Panc1 (cell line): ENCODE measurements at regions of chr2 and their contacts with region 1.

Region 1: DNA sequence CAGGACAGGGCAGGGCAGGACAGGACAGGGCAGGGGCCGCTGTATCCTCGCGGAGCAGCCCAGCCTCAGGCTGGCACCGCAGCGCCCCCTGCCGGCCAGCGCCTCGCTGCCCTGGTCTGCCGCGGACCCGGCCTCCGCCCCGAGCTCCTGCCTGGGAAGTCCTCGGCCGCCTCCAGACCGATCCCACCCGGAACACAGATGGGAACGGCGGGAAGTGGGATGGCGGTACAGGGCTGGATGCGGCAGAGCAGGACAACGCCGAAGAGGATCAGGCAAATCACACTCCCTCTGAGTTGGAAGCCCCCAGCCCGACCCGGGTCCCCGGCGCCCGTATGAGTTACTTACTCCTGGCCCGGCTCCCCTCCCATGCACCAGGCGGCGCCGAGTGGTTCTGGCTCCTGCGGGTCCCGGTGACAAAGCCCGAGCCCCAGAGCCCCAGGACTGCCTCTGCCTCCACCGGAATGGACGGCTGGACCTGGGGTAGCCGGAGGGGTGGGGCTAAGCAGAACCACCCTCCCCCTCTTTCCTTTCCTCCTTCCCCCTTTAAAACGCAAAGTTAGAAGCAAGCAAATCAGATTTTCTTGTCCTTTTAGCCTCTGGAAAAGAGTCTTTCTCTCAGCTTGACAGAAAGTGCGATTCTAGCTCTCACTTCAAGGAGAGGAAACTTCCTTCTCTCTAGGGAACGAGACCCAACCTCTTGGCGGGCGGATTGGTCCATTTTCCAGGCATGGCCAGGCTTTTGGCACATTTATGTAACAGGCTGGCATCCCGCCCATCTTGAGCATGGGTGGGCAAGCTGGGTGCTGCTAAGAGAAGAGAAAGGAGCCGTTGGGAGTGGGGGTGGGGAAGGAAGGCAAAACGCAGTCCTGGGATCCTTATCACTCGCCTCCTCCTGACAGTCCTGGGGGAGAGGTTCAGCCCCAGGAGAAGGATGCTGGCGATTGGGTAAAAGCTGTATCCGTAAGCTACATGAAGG is at the start of gene TP53I3:
- DNase-seq: peak; percentile 76
- ATAC-seq: peak; percentile 96
- H3K4me3 ChIP-seq: peak within 1 kb of the TSS; percentile 65 to 89
- H3K27ac ChIP-seq: peak within 1 kb of the TSS; percentile 99
- H3K4me1 ChIP-seq: peaks cover 13% of the 10 kb centered on the region
- H3K27me3 ChIP-seq: no peaks in the 10 kb centered on the region
- CTCF ChIP-seq: peak; percentile 100
- total RNA-seq, gene TP53I3: 51.3 TPM

Region 2: DNA sequence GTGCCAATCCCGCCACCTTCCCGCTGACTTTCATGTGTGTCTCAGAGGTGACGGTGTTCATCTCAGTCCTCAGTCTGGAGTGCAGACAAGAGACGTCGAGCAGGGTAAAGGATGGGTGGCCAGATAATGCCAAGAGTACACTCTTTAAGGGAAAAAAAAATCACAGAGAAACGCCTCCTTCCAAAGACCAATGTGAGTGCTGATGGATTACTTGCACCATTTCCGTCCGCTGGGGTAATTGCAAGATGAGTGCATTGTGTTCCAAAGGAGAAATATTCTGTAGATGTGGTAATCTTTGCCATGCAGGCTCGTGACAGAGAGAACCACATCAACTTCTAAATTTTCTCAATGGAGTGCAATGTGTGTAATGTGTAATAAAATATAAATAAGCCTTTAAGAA is 618.7 kb before region 1 on chr2:
- CTCF ChIA-PET with region 1: no interaction called
- POLR2A ChIA-PET with region 1: no interaction called
- in situ Hi-C with region 1: no loop called
- intact Hi-C with region 1: no loop called
- DNase-seq: no peak
- ATAC-seq: no peak
- H3K4me3 ChIP-seq: no peak overlapping the region
- H3K27ac ChIP-seq: no peak overlapping the region
- H3K4me1 ChIP-seq: no peaks in the 10 kb centered on the region
- H3K27me3 ChIP-seq: no peaks in the 10 kb centered on the region
- CTCF ChIP-seq: no peak

Region 3: DNA sequence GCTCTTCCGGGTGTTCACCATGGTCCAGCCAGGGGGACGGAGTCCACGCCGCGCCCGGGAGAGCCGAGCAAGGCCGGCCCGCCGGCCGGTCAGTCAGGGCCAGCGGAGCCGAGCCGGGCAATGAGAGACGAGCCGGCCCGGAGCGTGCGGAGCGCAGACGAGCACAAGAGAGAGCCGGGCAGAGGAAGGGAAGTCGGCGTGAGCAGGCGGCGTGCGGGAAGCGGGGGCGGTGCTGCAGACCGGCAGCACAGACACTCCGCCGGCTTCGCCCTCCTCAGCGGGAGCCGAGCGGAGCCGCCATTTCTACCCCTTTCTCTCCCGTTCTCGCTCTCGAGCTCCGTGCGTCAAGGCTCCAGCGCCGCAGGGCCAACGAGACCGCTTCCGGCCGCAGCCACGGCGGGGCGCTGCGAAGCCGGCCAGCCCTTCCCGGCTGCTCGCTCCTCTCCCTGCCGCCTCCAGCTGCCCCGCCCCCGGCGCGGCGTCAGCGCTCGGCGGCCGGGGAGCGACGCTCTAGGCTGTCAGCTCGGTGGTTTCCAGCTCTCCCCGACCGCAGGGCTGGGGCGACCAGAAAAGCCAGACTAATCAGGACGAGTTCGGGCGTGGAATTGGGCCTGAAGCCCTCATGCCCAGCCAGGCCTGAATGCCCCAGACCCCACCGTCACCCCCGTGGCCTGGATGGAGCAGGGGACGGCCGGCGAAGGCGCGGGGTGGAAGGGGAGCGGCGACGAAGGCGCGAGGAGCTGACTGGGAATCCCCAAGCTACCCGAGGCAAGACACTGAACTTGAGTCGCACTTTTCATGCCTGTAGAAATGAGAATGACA is 157.7 kb before region 1 on chr2 and contains the start of gene ATAD2B:
- CTCF ChIA-PET with region 1: interaction called, 12 read pairs
- POLR2A ChIA-PET with region 1: no interaction called
- in situ Hi-C with region 1: no loop called
- intact Hi-C with region 1: no loop called
- DNase-seq: peak; percentile 84
- ATAC-seq: peak; percentile 93
- H3K4me3 ChIP-seq: peak within 1 kb of the TSS; percentile 92 to 93
- H3K27ac ChIP-seq: peak within 1 kb of the TSS; percentile 93
- H3K4me1 ChIP-seq: peaks cover 8% of the 10 kb centered on the region
- H3K27me3 ChIP-seq: no peaks in the 10 kb centered on the region
- CTCF ChIP-seq: peak; percentile 98
- total RNA-seq, gene ATAD2B: 17.9 TPM

Region 4: GRCh38 chr2:23988371-23988770 is 96.3 kb before region 1 on chr2:
- CTCF ChIA-PET with region 1: no interaction called
- POLR2A ChIA-PET with region 1: no interaction called
- in situ Hi-C with region 1: no loop called
- intact Hi-C with region 1: loop called (anchors 5 kb)
- DNase-seq: peak; percentile 22
- ATAC-seq: peak; percentile 87
- H3K4me3 ChIP-seq: no peak overlapping the region
- H3K27ac ChIP-seq: no peak overlapping the region
- H3K4me1 ChIP-seq: no peaks in the 10 kb centered on the region
- H3K27me3 ChIP-seq: no peaks in the 10 kb centered on the region
- CTCF ChIP-seq: no peak; the same call in 1 of the 2 replicates

Region 5: DNA sequence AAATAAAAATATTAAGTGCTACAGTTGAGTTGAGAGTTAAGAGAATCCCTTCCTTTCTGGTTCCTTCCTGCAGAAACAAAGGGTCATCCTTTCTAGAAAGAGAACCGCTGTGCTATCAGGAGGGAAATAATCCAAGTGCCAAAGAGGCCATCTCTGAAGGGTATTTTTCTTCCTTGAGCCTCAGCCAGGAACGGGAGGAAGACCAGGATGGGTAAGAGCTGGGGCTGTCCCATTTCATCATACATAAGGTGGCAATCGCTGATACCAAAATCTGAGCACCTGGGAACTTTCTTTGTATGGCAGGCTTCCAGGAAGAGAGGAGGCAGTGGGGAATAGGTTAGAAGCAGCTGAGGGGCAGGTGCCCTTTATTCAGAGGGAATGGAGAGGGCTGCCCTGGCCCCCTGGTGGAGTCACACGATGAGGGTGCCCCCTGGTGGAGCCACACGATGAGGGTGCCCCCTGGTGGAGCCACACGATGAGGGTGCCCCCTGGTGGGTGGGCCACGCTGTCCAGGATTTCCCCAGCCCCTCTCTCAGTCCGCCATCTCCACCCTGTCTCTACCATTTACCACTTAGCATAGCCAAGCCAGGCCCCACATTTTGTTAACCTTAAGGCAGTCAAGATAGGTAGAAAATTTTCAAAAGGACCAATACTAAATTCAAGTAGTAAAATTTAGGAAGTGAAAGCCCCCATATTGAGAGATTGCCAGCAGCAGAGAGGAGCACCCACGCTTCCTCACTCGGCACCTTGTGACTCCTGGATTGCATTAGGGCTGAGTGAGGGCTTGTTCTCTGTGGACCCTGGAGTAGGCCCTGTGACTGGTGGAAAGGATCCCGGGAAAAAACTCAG is 79.7 kb after region 1 on chr2:
- CTCF ChIA-PET with region 1: interaction called, 4 read pairs
- POLR2A ChIA-PET with region 1: no interaction called
- in situ Hi-C with region 1: no loop called
- intact Hi-C with region 1: loop called (anchors 10 kb)
- DNase-seq: no peak
- ATAC-seq: peak; percentile 87
- H3K4me3 ChIP-seq: no peak overlapping the region
- H3K27ac ChIP-seq: no peak overlapping the region
- H3K4me1 ChIP-seq: no peaks in the 10 kb centered on the region
- H3K27me3 ChIP-seq: no peaks in the 10 kb centered on the region
- CTCF ChIP-seq: peak; percentile 84

Region 6: DNA sequence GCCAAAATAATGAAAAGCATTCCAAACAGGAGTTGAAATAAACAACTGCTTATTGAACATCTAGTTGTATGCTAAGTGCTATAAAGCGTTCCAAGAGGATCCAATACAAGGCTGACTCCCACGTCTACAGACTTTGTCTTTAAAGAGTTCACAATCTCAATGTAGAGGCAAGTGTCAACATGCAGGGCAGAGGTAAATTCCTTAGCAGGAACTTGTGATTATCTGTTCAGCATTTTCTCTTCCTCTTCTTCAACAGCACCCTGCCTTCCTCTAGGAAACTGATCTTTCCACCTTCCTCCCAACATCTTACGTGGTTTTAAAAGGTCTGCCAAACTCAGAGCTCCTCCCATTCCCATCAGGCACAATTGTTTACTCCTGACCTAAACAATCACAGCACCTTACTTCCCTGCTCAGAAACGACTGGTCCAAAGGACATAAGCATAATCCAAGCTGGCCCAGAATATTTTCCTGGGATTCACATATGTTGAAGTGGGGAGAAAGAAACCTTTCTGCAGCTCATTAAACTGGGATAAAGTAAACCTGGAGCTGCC is 191.8 kb after region 1 on chr2:
- CTCF ChIA-PET with region 1: no interaction called
- POLR2A ChIA-PET with region 1: no interaction called
- in situ Hi-C with region 1: no loop called
- intact Hi-C with region 1: no loop called
- DNase-seq: no peak
- ATAC-seq: no peak
- H3K4me3 ChIP-seq: no peak overlapping the region
- H3K27ac ChIP-seq: no peak overlapping the region
- H3K4me1 ChIP-seq: no peaks in the 10 kb centered on the region
- H3K27me3 ChIP-seq: no peaks in the 10 kb centered on the region
- CTCF ChIP-seq: no peak